Activated naive CD4-positive, alpha-beta T cell treated with anti-CD3 and anti-CD28 coated beads for 36 hours (primary cell): ENCODE measurements at regions of chr14 and their contacts with region 1.

Region 1: DNA sequence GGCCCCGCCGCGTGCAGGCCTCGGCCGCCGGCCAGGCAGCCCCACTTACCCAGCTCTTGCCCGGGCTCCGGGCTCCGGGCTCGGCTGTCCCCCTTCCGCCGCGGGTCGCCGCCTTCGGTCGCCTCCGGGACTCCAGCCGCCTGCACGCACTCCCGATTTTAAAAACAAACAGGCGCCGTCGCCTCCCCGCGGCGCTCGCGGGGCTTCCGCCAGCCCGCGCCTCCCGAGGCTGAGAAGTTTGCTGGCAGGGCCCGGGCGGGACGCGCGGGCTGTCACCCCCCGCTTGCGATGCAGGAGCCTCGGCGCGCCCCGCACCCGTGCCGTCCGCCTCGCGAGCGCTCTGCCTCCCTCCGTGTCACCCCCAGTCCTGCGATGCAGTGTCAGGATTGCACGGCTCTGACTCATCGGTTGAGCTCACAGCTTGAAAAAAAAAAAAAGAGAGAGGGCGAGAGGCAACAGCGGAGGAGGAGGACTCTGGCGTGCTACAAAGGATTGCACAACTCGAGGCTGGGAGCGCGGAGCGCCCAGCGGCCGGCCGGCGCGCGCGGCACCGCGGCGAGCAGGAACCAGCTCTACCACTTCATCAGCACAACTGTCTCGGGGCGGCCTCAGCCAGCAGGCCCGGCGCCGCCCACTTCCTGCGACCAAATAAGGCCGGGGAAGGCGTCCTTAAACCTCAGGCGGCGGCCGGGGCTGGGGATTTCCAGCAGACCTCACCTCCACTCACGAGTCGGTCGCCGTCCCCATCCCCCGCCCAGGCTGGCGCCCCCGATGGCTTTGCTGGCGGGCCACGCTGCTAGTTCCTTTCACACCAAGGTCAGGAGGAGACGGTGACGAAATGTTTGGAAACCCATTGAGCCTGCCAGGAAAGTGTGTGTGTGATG is 45.8 kb upstream of the PNMA1 start:
- DNase-seq: peak; percentile 97
- H3K4me3 Mint-ChIP-seq: peak overlapping the region; percentile 89
- H3K27ac Mint-ChIP-seq: peak overlapping the region; percentile 99
- H3K4me1 Mint-ChIP-seq: peaks cover 74% of the 10 kb centered on the region
- H3K27me3 Mint-ChIP-seq: no peaks in the 10 kb centered on the region

Region 2: GRCh38 chr14:73458151-73458976 is 301.6 kb before region 1 on chr14 and contains the start of gene NUMB:
- CTCF ChIA-PET with region 1: no interaction called
- intact Hi-C with region 1: loop called (anchors 5 kb)
- DNase-seq: peak; percentile 99
- H3K4me3 Mint-ChIP-seq: peak within 1 kb of the TSS; percentile 92
- H3K27ac Mint-ChIP-seq: peak within 1 kb of the TSS; percentile 79
- H3K4me1 Mint-ChIP-seq: peaks cover 42% of the 10 kb centered on the region
- H3K27me3 Mint-ChIP-seq: no peaks in the 10 kb centered on the region
- total RNA-seq, gene NUMB: 24.2 to 26.4 TPM

Region 3: DNA sequence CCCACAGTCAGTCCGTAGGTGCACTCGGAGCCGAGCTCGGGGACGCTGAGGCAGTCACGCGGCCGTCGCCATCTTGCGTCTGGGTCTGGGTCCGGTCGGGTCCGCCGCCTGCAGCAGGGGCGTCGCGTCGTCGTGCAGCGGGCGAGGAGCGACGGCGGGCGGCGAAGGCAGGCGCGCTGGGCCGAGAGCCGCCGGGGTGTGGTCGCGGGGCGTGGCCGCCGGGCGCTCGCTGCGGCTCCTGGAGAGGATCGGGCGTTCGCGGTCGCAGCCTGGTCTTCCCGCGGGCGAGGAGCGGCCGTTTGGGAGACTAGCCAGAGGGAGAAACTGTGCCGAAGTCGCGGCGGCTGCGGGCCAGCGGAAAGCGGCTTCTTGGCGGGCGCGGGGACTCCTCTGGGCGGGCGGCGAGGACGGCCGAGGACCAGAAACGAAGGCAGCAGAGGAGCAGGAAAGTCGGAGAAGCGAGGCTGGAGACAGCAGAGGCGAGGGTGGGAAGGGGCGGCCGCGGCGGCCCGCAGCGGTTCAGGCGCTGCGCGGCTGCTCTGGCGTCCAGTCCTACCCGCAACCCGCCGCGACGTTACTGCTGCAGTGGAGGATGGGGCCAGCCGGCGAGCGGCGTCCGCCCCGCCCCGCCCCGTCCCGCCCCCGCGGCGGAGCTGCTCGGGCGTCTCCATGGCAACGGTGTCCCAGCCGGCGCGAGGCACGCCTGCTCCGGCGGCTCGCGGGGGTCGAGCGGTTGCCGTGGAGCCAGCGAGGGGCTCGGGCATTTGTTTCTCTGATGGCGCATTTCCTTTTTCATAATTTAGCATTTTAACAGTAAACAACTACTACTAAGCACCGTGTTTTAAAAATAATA is 45.9 kb before region 1 on chr14 and contains the start of gene PNMA1:
- CTCF ChIA-PET with region 1: no interaction called
- intact Hi-C with region 1: loop called (anchors 1 kb)
- DNase-seq: peak; percentile 84
- H3K4me3 Mint-ChIP-seq: peak within 1 kb of the TSS; percentile 99
- H3K27ac Mint-ChIP-seq: peak within 1 kb of the TSS; percentile 85
- H3K4me1 Mint-ChIP-seq: peaks cover 13% of the 10 kb centered on the region
- H3K27me3 Mint-ChIP-seq: no peaks in the 10 kb centered on the region
- total RNA-seq, gene PNMA1: 18.5 to 19.2 TPM

Region 4: GRCh38 chr14:73771848-73772638 is 12.1 kb after region 1 on chr14:
- CTCF ChIA-PET with region 1: interaction called, 45 read pairs
- intact Hi-C with region 1: loop called (anchors 1 kb)
- DNase-seq: peak; percentile 92
- H3K4me3 Mint-ChIP-seq: peak overlapping the region; percentile 56
- H3K27ac Mint-ChIP-seq: peak overlapping the region; percentile 80
- H3K4me1 Mint-ChIP-seq: peaks cover 66% of the 10 kb centered on the region
- H3K27me3 Mint-ChIP-seq: no peaks in the 10 kb centered on the region

Region 5: GRCh38 chr14:73825551-73826188 is 65.7 kb after region 1 on chr14:
- CTCF ChIA-PET with region 1: interaction called, 15 read pairs
- intact Hi-C with region 1: loop called (anchors 1 kb)
- DNase-seq: peak; percentile 90
- H3K4me3 Mint-ChIP-seq: no peak overlapping the region
- H3K27ac Mint-ChIP-seq: no peak overlapping the region
- H3K4me1 Mint-ChIP-seq: peaks cover 14% of the 10 kb centered on the region
- H3K27me3 Mint-ChIP-seq: no peaks in the 10 kb centered on the region

Region 6: DNA sequence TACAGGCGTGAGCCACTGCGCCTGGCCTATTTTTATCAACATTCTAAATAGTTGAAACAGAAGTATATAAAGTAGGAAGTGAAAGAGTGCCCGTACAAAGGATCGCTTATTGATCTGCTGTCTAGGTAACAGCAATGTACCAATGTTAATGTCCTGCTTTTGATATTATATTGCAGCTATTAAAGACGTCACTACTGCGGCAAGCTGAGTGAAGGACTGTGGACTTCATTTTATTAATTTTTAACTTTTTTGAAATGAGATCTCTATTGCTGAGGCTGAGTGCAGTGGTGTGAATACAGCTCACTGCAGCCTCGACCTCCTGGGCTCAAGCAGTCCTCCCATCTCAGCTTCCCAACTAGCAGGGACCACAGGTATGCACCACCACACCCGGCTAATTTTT is 102.5 kb after region 1 on chr14:
- CTCF ChIA-PET with region 1: no interaction called
- intact Hi-C with region 1: no loop called
- DNase-seq: no peak
- H3K4me3 Mint-ChIP-seq: no peak overlapping the region
- H3K27ac Mint-ChIP-seq: no peak overlapping the region
- H3K4me1 Mint-ChIP-seq: no peaks in the 10 kb centered on the region
- H3K27me3 Mint-ChIP-seq: no peaks in the 10 kb centered on the region

Region 7: DNA sequence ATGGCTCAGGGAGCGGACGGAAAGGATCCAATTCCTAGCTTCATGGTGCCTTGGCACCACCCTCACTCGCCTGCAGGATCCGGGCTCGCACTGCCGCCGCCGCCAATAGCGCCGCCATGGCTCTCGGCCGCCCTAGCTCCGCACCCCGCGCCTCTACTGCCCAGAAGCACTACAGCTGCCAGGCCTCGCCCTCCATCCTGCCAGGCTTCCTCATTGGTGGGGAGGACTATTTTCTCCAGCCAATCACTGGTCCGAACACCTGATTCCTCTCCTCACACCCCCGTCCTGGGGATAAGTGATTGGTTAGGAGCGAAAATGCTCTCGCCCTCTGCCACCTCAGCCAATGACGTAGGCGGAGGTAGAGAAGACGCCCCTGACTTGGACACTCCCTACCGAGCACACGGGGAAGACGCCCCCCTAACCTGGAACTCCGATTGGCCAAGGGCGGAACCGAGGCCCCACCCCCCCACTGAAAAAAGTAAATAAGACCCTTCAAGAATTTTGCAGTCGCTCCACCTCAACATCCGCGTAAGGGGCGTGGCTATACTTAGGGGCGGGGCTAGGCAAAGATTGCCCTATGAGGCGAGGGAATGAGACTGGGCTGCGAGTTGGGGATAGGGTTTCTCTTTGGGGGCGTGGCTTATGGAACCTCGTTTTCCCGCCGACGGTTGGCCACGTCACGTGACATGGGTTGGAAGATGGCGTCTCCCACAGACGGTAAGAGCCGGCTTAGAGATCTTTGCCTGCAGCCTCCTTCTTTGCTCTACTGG is 324.5 kb after region 1 on chr14 and contains the starts of genes ALDH6A1 and LIN52:
- CTCF ChIA-PET with region 1: no interaction called
- intact Hi-C with region 1: loop called (anchors 2 kb)
- DNase-seq: peak; percentile 100
- H3K4me3 Mint-ChIP-seq: peak within 1 kb of the TSS; percentile 99
- H3K27ac Mint-ChIP-seq: peak within 1 kb of the TSS; percentile 95
- H3K4me1 Mint-ChIP-seq: peaks cover 38% of the 10 kb centered on the region
- H3K27me3 Mint-ChIP-seq: no peaks in the 10 kb centered on the region
- total RNA-seq, gene ALDH6A1: 24.0 to 25.3 TPM
- total RNA-seq, gene LIN52: 10.7 to 13.6 TPM